GM10248 (cell line): ENCODE measurements at regions of chr19 and their contacts with region 1.

Region 1: GRCh38 chr19:947265-948036 is 21.6 kb downstream of the ARID3A start:
- DNase-seq: peak; percentile 91
- CTCF ChIP-seq: no peak

Region 2: GRCh38 chr19:843180-843835 is 104.1 kb before region 1 on chr19:
- CTCF ChIA-PET with region 1: no interaction called
- POLR2A ChIA-PET with region 1: no interaction called
- DNase-seq: no peak
- CTCF ChIP-seq: no peak

Region 3: GRCh38 chr19:933216-933882 is 14.1 kb before region 1 on chr19:
- CTCF ChIA-PET with region 1: interaction called, 10 read pairs
- POLR2A ChIA-PET with region 1: interaction called, 8 read pairs
- DNase-seq: no peak
- CTCF ChIP-seq: no peak

Region 4: DNA sequence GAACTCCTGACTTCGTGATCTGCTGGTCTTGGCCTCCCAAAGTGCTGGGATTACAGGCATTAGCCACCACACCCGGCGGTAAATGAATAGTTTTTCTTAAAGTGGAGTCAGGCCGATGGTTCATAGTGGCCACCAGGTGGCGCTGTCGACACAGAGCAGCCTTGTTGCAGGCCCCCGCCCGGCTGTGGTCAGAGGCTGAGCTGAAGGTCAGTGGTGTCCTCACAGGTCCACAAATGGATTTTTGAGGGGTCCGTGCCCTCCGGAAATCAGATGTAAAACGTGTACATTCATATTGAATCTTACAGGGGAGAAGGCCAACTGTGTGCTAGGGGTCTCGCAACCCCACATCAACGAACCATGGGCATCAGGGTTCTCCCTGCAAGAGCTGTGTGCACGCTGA is 23.2 kb after region 1 on chr19:
- CTCF ChIA-PET with region 1: no interaction called
- POLR2A ChIA-PET with region 1: no interaction called
- DNase-seq: no peak
- CTCF ChIP-seq: peak; percentile 50